GM23248 (cell line): ENCODE measurements at regions of chr20 and their contacts with region 1.

Region 1: DNA sequence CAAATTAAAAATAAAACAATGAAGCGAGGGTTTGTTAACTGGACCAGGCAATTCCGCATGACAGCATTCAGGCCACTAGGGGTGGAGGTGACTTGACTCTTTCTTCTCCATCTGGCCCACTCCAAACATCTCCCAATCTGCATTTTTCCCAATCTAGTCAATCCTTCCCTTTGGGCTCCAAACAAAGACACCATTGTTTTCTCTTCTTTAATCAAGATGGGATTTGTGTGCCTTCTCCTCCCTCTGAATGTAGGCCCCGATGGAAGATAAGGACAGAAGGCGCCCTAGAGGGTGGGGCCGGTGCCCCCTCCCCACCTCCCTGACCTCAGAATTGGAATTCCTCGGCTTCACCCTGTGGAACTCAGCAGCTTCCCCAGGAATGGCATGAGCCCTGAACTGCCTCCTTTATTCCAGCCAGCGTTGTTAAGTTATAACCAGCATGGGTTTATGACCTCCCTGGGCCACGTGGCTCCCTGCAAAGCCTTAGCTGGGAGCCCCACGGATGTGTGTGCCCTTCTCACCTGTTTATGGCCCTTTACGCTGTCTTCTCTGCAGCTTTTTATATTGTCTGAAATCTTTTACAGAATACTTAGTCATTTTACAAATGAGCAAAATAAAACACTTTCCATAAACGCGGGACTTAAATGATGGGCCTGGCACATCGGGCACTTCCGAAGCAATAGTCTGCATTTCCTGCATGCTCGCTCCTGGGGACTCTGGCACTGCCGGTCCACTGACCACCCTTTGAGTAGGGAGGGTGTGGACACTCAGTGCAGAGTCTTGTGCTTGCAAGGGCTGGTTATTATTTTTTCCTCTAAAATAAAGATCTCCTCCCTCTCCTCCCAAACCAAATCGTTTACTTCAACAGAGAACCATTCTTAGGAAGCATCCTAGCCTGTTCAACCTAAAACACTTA is 24.5 kb downstream of the OVOL2 start:
- DNase-seq: peak; percentile 12
- H3K4me3 ChIP-seq: no peak overlapping the region
- H3K27ac ChIP-seq: no peak overlapping the region
- H3K4me1 ChIP-seq: no peaks in the 10 kb centered on the region
- H3K27me3 ChIP-seq: peaks cover 15% of the 10 kb centered on the region; the same call in 1 of the 2 replicates

Region 2: DNA sequence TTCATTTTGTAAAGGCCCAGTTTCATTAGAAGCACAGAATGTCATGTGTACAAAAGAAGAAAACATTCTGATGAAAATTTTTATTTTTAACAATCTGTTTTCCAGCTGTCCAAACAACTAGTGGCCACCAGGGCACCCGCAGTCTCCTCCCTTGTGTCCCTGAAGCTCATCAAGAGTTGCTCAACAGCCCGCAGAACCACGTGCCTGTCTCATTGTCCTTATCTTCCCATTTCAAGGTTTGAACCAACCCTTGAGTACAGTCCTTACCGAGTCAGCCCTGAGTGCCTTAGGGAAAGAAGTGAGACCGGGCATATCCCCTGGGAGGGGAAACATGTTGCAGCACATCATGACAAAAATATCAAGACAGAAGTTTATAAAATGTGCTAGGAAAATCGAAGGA is 239.2 kb after region 1 on chr20:
- in situ Hi-C with region 1: loop called (anchors 25 kb)
- DNase-seq: peak; percentile 51
- H3K4me3 ChIP-seq: no peak overlapping the region
- H3K27ac ChIP-seq: no peak overlapping the region
- H3K4me1 ChIP-seq: no peaks in the 10 kb centered on the region
- H3K27me3 ChIP-seq: peaks cover 17% of the 10 kb centered on the region; the same call in 1 of the 2 replicates